HEK293T (cell line): ENCODE measurements at regions of chr7 and their contacts with region 1.

Region 1: DNA sequence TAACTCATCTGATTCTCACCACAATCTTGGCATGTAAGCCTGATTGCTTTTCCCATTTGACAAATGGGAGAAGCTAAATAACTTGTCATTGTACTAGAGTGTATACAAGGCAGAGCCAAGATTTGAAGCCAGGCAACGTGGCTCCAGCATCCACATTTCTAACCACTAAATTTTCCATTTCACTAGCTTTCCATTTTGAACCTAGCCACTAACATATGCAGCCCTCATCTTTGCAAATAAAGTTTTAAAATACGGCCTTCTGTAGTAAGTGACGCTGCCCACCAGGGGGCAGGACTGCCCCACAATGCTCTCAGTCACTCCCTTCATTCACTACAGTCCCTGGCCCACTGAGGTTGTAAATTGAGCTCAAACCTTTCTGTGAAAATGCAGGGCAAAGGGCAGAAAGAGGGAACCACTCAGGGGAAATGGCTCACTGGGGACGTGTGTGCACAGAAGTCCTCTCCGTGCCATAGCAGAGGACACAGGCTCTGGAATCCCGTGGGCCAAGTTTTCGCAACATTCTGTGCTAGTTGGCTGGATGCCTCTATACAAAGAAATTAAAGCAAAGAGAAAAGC is 315.7 kb downstream of the TNS3 start:
- DNase-seq: peak; percentile 67

Region 2: GRCh38 chr7:47277321-47277792 is 11.1 kb after region 1 on chr7:
- CTCF ChIA-PET with region 1: no interaction called
- POLR2A ChIA-PET with region 1: no interaction called
- DNase-seq: no peak

Region 3: GRCh38 chr7:47314728-47315607 is 48.7 kb after region 1 on chr7:
- CTCF ChIA-PET with region 1: no interaction called
- POLR2A ChIA-PET with region 1: no interaction called
- DNase-seq: no peak

Region 4: DNA sequence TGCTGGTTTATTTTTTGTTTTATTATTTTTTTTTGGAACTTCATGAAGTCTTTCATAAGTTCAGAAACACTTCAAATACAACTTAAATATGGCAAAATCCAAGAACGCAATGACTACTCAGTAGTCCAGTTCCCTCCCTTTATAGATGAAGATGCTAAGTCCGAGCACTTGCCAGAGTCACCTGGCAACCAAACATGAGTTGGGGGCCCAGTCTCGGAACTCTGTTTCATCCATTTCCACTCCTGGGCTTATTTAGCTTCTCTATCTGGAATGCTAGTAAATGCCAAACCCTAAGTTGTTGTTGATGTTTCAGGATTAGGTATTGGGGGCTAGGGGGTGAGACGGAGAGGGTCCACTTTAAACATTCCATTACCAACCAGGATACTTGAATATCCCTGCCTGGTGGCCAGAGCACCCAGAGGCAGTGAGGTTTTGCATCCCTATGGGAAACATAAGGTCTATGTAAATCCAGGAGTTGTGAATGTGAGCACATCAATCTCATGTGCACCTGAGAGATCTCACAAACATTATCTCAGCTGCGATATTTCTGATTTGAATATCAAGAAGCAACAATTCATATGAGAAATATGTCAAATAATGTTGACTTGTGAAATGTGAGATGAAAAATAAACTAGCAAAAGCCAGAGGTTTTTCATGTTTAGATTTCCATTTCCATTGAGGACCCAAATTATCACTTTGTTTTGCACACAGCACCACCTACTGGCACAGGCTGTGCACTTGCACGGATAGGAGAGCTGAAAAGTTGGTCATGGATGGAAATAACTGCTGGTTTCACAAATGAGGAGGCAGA is 552.8 kb after region 1 on chr7:
- CTCF ChIA-PET with region 1: interaction called, 16 read pairs
- POLR2A ChIA-PET with region 1: no interaction called
- DNase-seq: peak; percentile 64